ENCODE measurements at regions of chr13 and their contacts with region 1.

Region 1: GRCh38 chr13:51583875-51584730 is at the start of gene WDFY2:
- DNase-seq: peak; percentile 100
- H3K4me3 ChIP-seq: peak within 1 kb of the TSS; percentile 81
- H3K27ac ChIP-seq: peak within 1 kb of the TSS; percentile 80
- H3K4me1 ChIP-seq: no peaks in the 10 kb centered on the region
- H3K27me3 ChIP-seq: no peaks in the 10 kb centered on the region
- CTCF ChIP-seq: no peak
- total RNA-seq, gene WDFY2: 2.7 to 3.3 TPM

Region 2: GRCh38 chr13:51348069-51348967 is 235.8 kb before region 1 on chr13:
- intact Hi-C with region 1: no loop called
- DNase-seq: no peak
- H3K4me3 ChIP-seq: no peak overlapping the region
- H3K27ac ChIP-seq: no peak overlapping the region
- H3K4me1 ChIP-seq: no peaks in the 10 kb centered on the region
- H3K27me3 ChIP-seq: no peaks in the 10 kb centered on the region
- CTCF ChIP-seq: no peak

Region 3: GRCh38 chr13:51457086-51457815 is 126.9 kb before region 1 on chr13:
- intact Hi-C with region 1: loop called (anchors 5 kb)
- DNase-seq: no peak
- H3K4me3 ChIP-seq: no peak overlapping the region
- H3K27ac ChIP-seq: no peak overlapping the region
- H3K4me1 ChIP-seq: no peaks in the 10 kb centered on the region
- H3K27me3 ChIP-seq: no peaks in the 10 kb centered on the region
- CTCF ChIP-seq: no peak

Region 4: GRCh38 chr13:51645154-51645650 is 61.1 kb after region 1 on chr13:
- intact Hi-C with region 1: no loop called
- DNase-seq: no peak
- H3K4me3 ChIP-seq: no peak overlapping the region
- H3K27ac ChIP-seq: no peak overlapping the region
- H3K4me1 ChIP-seq: no peaks in the 10 kb centered on the region
- H3K27me3 ChIP-seq: no peaks in the 10 kb centered on the region
- CTCF ChIP-seq: no peak

Region 5: DNA sequence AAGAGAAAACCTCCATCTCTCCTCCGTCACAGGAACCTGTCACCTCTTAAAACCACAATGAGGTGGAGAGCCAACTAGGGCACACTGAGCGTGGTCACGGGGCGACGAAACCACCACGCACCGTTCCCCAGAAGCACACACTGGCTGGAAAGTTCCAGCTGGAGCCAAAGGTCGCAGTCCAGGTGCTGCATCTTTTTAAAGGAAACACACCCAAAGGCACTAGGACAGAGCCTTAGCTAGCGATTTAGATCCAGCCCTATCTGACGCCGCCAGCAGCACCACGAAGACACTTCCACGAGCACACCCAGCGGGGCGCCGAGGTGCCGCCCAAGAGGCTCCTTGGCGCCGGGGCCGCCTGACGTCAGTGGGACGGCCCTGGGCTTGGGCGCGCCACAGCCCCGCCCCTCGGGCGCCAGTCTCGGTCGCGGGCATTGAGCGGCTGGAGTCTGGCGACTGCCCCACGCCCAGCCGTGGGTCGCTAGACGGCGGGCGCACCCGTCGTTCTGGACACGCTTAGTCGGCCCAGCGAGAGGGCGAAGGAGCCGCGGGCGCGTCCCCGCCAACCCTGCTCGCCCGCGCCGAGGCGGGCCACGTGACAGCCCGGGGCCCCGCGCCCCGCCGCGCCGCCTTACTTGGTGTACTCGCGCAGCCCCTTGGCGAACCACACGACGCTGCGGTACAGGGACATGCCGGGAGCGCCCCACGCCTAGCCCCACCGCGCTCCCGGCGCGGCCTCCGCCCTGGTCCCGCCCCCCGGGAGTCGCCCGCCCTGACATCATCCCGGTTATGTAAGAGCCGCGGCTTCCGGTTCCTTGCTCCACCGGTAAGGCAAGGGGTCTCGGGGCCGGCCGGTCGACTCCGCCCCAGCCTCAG is 219.6 kb after region 1 on chr13 and contains the start of gene DHRS12:
- intact Hi-C with region 1: loop called (anchors 5 kb)
- DNase-seq: peak; percentile 94
- H3K4me3 ChIP-seq: peak within 1 kb of the TSS; percentile 67
- H3K27ac ChIP-seq: peak within 1 kb of the TSS; percentile 99
- H3K4me1 ChIP-seq: peaks cover 13% of the 10 kb centered on the region
- H3K27me3 ChIP-seq: no peaks in the 10 kb centered on the region
- CTCF ChIP-seq: no peak
- total RNA-seq, gene DHRS12: 6.6 to 12.4 TPM

Region 6: GRCh38 chr13:52118595-52118994 is 534.5 kb after region 1 on chr13:
- intact Hi-C with region 1: no loop called
- DNase-seq: no peak
- H3K4me3 ChIP-seq: no peak overlapping the region
- H3K27ac ChIP-seq: no peak overlapping the region
- H3K4me1 ChIP-seq: no peaks in the 10 kb centered on the region
- H3K27me3 ChIP-seq: no peaks in the 10 kb centered on the region
- CTCF ChIP-seq: no peak